ENCODE measurements at regions of chr2 and their contacts with region 1.

Region 1: DNA sequence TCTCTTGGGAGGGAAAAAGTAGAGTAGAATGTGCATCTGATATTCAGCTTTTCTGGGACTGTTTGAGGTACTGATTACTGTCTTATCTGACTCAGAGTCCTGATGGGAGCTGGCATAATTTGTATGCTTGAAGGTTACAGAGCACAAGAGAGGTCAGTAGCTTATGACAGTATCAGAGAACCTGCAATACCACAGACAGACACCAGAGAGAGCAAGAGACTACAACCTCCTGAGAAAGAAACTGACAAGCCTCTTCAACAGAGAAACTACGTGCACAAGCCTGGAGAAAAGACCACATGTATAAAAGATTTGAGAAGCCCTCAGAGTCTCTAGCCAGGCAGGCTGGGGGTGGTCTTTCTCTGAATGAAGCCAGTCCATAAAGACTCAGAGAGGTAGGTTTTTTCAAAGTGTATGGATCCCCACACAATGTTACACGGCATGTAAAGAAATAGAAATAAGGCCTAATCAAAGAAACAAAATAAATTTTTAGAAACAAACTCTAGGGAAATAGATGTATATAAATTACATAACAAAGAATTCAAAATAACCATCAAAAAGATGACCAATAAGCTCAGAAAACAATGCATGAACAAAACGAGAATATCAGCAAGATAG is 568.3 kb downstream of the LRRTM4 start:
- DNase-seq: peak; percentile 85
- H3K4me3 ChIP-seq: no peak overlapping the region
- H3K27ac ChIP-seq: no peak overlapping the region
- H3K4me1 ChIP-seq: peaks cover 3% of the 10 kb centered on the region
- H3K27me3 ChIP-seq: no peaks in the 10 kb centered on the region
- CTCF ChIP-seq: peak; percentile 81

Region 2: DNA sequence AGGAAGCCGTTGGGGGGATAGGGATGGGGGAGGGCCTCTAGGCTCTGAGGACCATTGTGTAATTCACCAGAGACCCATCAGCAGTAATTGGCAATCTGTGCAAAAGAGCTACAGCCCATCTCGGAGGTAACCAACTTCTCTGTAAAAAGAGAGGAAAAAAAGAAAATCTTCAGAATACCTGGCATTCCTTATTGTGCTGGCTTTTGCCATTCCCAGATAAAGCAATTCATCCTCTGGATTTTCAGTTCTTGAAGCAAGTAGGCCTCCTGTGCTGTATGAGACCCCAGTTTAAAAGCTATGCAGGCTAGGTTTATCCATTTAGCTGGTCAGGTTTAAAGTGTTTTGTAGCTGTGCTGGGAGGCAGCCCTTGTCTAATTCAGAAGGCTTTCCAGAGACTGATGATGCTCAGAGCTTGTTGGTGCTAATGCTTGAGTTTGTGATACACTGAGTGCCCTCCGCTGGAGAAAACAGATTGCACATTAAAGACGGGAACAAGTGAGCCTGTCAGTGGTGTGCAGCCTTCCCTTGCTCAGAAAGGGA is 568.2 kb after region 1 on chr2 and contains the start of gene LRRTM4:
- CTCF ChIA-PET with region 1: interaction called, 4 read pairs
- POLR2A ChIA-PET with region 1: no interaction called
- intact Hi-C with region 1: loop called (anchors 2 kb)
- DNase-seq: peak; percentile 63
- H3K4me3 ChIP-seq: no peak within 1 kb of the TSS
- H3K27ac ChIP-seq: no peak within 1 kb of the TSS
- H3K4me1 ChIP-seq: no peaks in the 10 kb centered on the region
- H3K27me3 ChIP-seq: no peaks in the 10 kb centered on the region
- CTCF ChIP-seq: peak; percentile 52
- total RNA-seq, gene LRRTM4: 0.13 and 0.15 TPM in 2 replicates

Region 3: DNA sequence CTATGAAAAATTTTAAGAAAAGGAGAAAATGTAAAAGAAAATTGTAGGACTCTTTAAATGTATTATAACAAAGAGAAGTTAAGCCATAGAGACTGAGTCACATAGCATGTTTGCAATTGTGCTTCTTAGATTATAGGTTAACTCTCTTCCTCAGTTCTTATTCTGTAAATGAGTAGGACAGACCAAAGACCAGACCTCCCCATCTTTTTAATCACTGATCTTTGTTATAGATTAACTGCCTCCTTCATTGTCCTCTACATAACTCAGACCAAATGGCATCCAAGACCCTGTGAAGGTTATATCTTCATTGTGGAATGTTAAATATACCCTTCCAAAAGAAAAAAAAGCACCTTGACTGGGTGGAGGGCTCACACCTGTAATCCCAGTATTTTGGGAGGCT is 885.3 kb after region 1 on chr2:
- CTCF ChIA-PET with region 1: no interaction called
- POLR2A ChIA-PET with region 1: no interaction called
- intact Hi-C with region 1: no loop called
- DNase-seq: no peak
- H3K4me3 ChIP-seq: no peak overlapping the region
- H3K27ac ChIP-seq: no peak overlapping the region
- H3K4me1 ChIP-seq: no peaks in the 10 kb centered on the region
- H3K27me3 ChIP-seq: no peaks in the 10 kb centered on the region
- CTCF ChIP-seq: no peak

Region 4: GRCh38 chr2:77977471-77978063 is 1023.7 kb after region 1 on chr2:
- CTCF ChIA-PET with region 1: no interaction called
- POLR2A ChIA-PET with region 1: no interaction called
- intact Hi-C with region 1: loop called (anchors 5 kb)
- DNase-seq: peak; percentile 48
- H3K4me3 ChIP-seq: no peak overlapping the region
- H3K27ac ChIP-seq: no peak overlapping the region
- H3K4me1 ChIP-seq: peaks cover 5% of the 10 kb centered on the region
- H3K27me3 ChIP-seq: no peaks in the 10 kb centered on the region
- CTCF ChIP-seq: peak; percentile 48

Measured in A673 (cell line).